CD8-positive, alpha-beta T cell (primary cell): ENCODE measurements at regions of chr1 and their contacts with region 1.

Region 1: GRCh38 chr1:25430666-25431505 is at the start of gene MACO1:
- DNase-seq: peak; percentile 92 to 99 (median 96)
- ATAC-seq: peak; percentile 80
- H3K4me3 ChIP-seq: peak within 1 kb of the TSS; percentile 64 to 94
- H3K4me3 Mint-ChIP-seq: peak within 1 kb of the TSS; percentile 94
- H3K27ac ChIP-seq: peak within 1 kb of the TSS; percentile 88 to 99
- H3K27ac Mint-ChIP-seq: peak within 1 kb of the TSS; percentile 99
- H3K4me1 ChIP-seq: peaks cover 44% of the 10 kb centered on the region
- H3K4me1 Mint-ChIP-seq: peaks cover 53% of the 10 kb centered on the region
- H3K27me3 ChIP-seq: no peaks in the 10 kb centered on the region
- H3K27me3 Mint-ChIP-seq: no peaks in the 10 kb centered on the region
- CTCF ChIP-seq: no peak
- total RNA-seq, gene MACO1: 44.7 to 47.0 TPM

Region 2: GRCh38 chr1:24996983-24997893 is 433.6 kb before region 1 on chr1:
- CTCF ChIA-PET with region 1: no interaction called
- POLR2A ChIA-PET with region 1: no interaction called
- intact Hi-C with region 1: no loop called
- DNase-seq: peak in 8 of 9 experiments; percentile 34 to 86 (median 74)
- ATAC-seq: peak; percentile 65
- H3K4me3 ChIP-seq: peak overlapping the region in 1 of 2 experiments; percentile 1
- H3K4me3 Mint-ChIP-seq: peak overlapping the region; percentile 54
- H3K27ac ChIP-seq: peak overlapping the region; percentile 14 to 73
- H3K27ac Mint-ChIP-seq: peak overlapping the region; percentile 92
- H3K4me1 ChIP-seq: peaks cover 89% of the 10 kb centered on the region
- H3K4me1 Mint-ChIP-seq: peaks cover 92% of the 10 kb centered on the region
- H3K27me3 ChIP-seq: no peaks in the 10 kb centered on the region
- H3K27me3 Mint-ChIP-seq: no peaks in the 10 kb centered on the region
- CTCF ChIP-seq: no peak

Region 3: DNA sequence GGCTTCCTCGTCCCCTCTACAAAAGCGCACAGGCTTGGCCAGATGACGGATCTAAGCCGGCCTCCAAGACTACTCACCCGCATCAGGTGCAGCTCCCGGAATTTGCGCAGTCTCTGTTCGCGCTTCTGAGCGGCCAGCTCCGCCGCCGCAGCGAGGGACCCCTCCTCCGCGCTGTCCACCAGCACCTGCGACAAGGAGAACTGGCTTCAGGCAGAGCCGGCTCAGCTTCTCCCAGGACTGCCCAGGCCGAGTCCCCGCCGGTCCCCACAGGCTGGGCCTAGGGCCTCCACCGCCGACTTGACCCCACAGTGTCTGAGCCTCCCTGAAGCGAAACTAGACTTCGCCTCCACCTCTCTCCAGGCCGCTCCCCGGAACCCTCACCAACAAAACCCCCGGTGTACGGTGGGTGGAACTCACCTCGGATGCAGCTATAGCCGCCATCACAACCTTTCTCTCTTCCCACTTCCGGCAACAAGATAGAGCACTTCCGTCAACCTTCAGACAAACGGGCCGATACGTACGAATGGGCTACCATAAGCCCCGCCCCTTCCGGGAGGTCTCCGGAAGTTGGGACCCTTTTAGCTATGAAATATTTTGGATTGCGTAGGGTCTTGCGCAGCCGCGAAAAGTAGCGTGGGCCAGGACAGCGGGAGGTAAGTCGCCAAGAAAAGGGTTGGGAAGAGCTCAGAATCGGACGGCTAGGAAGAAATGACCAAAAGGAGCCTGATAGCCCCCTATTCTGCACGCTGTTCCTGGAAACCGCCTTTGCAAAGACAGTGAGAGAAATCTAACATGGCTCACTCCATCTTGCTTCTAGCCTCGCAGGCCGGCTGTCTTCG is 198.6 kb before region 1 on chr1 and contains the start of gene SYF2:
- CTCF ChIA-PET with region 1: no interaction called
- POLR2A ChIA-PET with region 1: interaction called, 16 read pairs
- intact Hi-C with region 1: loop called in 1 of 2 experiments (anchors 2 kb)
- DNase-seq: peak; percentile 77 to 98 (median 93)
- ATAC-seq: peak; percentile 87
- H3K4me3 ChIP-seq: peak within 1 kb of the TSS; percentile 60 to 92
- H3K4me3 Mint-ChIP-seq: no peak within 1 kb of the TSS
- H3K27ac ChIP-seq: peak within 1 kb of the TSS; percentile 94 to 97
- H3K27ac Mint-ChIP-seq: no peak within 1 kb of the TSS
- H3K4me1 ChIP-seq: peaks cover 23% of the 10 kb centered on the region
- H3K4me1 Mint-ChIP-seq: peaks cover 38% of the 10 kb centered on the region
- H3K27me3 ChIP-seq: no peaks in the 10 kb centered on the region
- H3K27me3 Mint-ChIP-seq: no peaks in the 10 kb centered on the region
- CTCF ChIP-seq: no peak
- total RNA-seq, gene SYF2: 103 to 118 TPM

Region 4: GRCh38 chr1:25338188-25338981 is 92.5 kb before region 1 on chr1 and contains the start of gene TMEM50A:
- CTCF ChIA-PET with region 1: no interaction called
- POLR2A ChIA-PET with region 1: no interaction called
- intact Hi-C with region 1: loop called (anchors 2 kb)
- DNase-seq: peak; percentile 87 to 95 (median 90)
- ATAC-seq: peak; percentile 72
- H3K4me3 ChIP-seq: peak within 1 kb of the TSS; percentile 67 to 86
- H3K4me3 Mint-ChIP-seq: peak within 1 kb of the TSS; percentile 95
- H3K27ac ChIP-seq: peak within 1 kb of the TSS; percentile 89
- H3K27ac Mint-ChIP-seq: peak within 1 kb of the TSS; percentile 97
- H3K4me1 ChIP-seq: peaks cover 24% of the 10 kb centered on the region
- H3K4me1 Mint-ChIP-seq: peaks cover 44% of the 10 kb centered on the region
- H3K27me3 ChIP-seq: no peaks in the 10 kb centered on the region
- H3K27me3 Mint-ChIP-seq: no peaks in the 10 kb centered on the region
- CTCF ChIP-seq: no peak
- total RNA-seq, gene TMEM50A: 103 to 118 TPM

Region 5: DNA sequence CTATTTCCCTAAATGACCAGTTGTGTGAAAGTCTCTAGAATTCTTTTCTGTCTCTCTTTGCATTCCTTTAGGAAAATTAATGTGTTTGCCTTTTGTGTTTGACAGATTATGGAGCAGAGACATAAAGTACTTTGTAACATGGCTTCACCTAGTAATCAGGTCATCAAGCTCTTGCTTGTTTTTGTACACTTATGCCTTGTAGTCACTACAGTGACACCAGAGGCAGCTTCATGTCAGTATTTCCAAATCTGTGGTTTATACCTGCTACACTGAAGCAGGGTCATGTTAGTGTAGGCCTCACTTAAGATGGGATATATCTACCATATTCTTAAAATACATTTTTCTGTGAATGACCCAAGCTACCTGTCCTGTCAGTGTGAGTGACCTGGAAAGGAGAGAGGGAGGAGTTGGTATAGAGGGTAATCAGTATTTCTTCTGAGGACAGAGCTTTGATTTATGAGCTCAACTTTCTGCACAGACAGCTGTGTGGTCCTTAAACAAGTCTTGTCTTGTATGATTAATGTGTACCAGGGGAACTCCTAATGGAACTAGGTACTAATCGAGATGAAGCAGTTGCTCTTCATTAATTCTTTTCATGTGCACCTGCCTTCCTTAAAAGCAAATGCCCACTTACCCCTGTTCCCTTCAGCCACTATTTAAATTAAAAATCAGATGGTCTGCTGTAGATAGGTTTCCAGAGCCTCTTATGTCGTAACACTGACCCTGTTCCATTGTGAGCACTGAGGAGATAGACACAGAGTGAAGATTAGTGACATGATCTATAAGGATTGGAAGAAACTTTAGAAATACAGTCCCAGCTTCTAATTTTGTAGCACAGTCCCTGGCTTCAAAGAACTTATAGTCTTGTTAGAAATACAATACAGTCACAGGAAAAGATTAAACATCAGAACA is 45.6 kb after region 1 on chr1:
- CTCF ChIA-PET with region 1: no interaction called
- POLR2A ChIA-PET with region 1: interaction called, 14 read pairs
- intact Hi-C with region 1: loop called (anchors 5 kb)
- DNase-seq: peak in 1 of 9 experiments; percentile 21
- ATAC-seq: no peak
- H3K4me3 ChIP-seq: no peak overlapping the region
- H3K4me3 Mint-ChIP-seq: no peak overlapping the region
- H3K27ac ChIP-seq: no peak overlapping the region
- H3K27ac Mint-ChIP-seq: peak overlapping the region; percentile 77
- H3K4me1 ChIP-seq: peaks cover 49% of the 10 kb centered on the region
- H3K4me1 Mint-ChIP-seq: peaks cover 64% of the 10 kb centered on the region
- H3K27me3 ChIP-seq: no peaks in the 10 kb centered on the region
- H3K27me3 Mint-ChIP-seq: no peaks in the 10 kb centered on the region
- CTCF ChIP-seq: no peak

Region 6: DNA sequence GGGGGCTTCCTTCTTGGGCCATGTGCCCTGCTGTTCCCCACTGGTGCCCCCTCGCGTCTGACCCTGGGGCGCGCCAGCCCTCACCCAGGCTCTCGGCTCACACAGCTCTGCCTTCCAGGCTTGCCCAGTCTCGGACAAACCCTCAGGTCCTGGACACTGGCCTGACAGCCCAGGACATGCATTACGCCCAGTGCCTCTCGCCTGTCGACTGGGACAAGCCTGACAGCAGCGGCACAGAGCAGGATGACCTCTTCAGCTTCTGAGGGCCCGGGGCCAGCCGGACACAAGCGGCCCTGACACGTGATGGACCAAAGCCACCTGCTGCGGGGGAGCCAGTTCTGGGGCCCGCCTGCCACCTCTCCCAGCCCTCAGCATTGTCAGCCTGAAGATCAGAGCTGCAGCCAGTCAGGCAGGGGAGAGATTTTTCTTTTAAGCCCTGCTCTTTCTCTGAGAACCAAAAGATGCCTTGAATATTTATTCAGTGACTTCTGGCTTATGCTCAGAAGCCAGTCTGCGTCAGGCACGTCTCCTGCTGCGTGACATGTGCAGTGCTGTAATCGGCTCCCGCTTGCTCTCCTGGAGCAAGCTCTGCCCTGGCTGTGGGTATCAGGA is 135.9 kb after region 1 on chr1:
- CTCF ChIA-PET with region 1: interaction called, 3 read pairs
- POLR2A ChIA-PET with region 1: interaction called, 3 read pairs
- intact Hi-C with region 1: loop called in 1 of 2 experiments (anchors 5 kb)
- DNase-seq: peak in 7 of 9 experiments; percentile 40 to 82 (median 74)
- ATAC-seq: peak; percentile 27
- H3K4me3 ChIP-seq: peak overlapping the region in 1 of 2 experiments; percentile 85
- H3K4me3 Mint-ChIP-seq: peak overlapping the region; percentile 95
- H3K27ac ChIP-seq: peak overlapping the region in 1 of 2 experiments; percentile 25
- H3K27ac Mint-ChIP-seq: peak overlapping the region; percentile 96
- H3K4me1 ChIP-seq: peaks cover 73% of the 10 kb centered on the region
- H3K4me1 Mint-ChIP-seq: peaks cover 86% of the 10 kb centered on the region
- H3K27me3 ChIP-seq: no peaks in the 10 kb centered on the region
- H3K27me3 Mint-ChIP-seq: no peaks in the 10 kb centered on the region
- CTCF ChIP-seq: peak; percentile 49

Region 7: GRCh38 chr1:25819576-25820246 is 388.8 kb after region 1 on chr1 and contains the start of gene MTFR1L:
- CTCF ChIA-PET with region 1: no interaction called
- POLR2A ChIA-PET with region 1: interaction called, 4 read pairs
- intact Hi-C with region 1: loop called in 1 of 2 experiments (anchors 1 kb)
- DNase-seq: peak; percentile 78 to 96 (median 94)
- ATAC-seq: peak; percentile 87
- H3K4me3 ChIP-seq: peak within 1 kb of the TSS; percentile 74 to 95
- H3K4me3 Mint-ChIP-seq: peak within 1 kb of the TSS; percentile 94
- H3K27ac ChIP-seq: peak within 1 kb of the TSS; percentile 65 to 77
- H3K27ac Mint-ChIP-seq: peak within 1 kb of the TSS; percentile 97
- H3K4me1 ChIP-seq: peaks cover 20% of the 10 kb centered on the region
- H3K4me1 Mint-ChIP-seq: peaks cover 35% of the 10 kb centered on the region
- H3K27me3 ChIP-seq: no peaks in the 10 kb centered on the region
- H3K27me3 Mint-ChIP-seq: no peaks in the 10 kb centered on the region
- CTCF ChIP-seq: no peak
- total RNA-seq, gene MTFR1L: 22.9 to 25.7 TPM